ENCODE measurements at regions of chr20 and their contacts with region 1.

Region 1: GRCh38 chr20:4886771-4887527 is 114.4 kb downstream of the SLC23A2 start:
- DNase-seq: no peak
- H3K4me3 ChIP-seq: no peak overlapping the region
- H3K27ac ChIP-seq: no peak overlapping the region
- H3K4me1 ChIP-seq: no peaks in the 10 kb centered on the region
- H3K27me3 ChIP-seq: no peaks in the 10 kb centered on the region
- CTCF ChIP-seq: no peak

Region 2: DNA sequence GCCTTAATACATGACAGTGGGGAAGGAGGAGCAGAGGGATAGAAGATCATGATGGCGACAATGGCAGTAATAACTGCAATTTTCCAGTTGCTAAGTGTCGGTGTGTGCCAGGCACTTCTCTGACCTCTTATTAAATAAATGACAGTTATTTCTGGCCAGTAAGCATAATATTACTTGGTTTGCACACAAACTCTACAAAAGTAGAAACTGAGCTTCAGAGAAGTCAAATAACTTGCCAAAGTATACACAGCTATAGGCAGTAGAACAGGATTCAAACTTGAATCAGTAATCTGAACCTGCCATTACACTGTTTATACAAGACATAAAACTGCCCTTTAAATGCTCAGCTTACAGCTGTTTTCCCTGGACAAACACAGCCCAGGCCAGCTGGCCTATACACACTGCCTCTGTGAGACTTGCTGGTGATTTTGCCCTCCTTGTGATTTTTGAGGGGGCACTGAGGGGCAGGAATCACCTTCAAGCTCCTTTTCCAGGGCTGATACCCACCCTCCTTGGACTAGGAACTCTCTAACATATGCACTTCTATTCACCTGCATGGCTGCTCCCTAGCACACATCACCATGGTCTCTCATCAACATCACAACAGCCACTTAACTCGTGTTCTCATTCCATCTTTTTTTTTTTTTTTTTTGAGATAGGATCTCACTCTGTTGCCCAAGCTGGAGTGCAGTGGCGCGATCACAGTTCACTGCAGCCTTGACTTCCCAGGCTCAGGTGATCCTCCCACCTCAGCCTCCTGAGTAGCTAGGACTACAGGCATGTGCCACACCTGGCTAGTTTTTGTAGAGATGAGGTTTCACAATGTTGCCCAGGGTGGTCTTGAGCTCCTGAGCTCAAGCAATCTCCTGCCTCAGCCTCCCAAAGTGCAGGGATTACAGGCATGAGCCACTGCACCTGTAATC is 50.7 kb after region 1 on chr20:
- CTCF ChIA-PET with region 1: no interaction called
- POLR2A ChIA-PET with region 1: interaction called, 12 read pairs
- intact Hi-C with region 1: no loop called
- DNase-seq: no peak
- H3K4me3 ChIP-seq: no peak overlapping the region
- H3K27ac ChIP-seq: no peak overlapping the region
- H3K4me1 ChIP-seq: peaks cover 10% of the 10 kb centered on the region
- H3K27me3 ChIP-seq: no peaks in the 10 kb centered on the region
- CTCF ChIP-seq: no peak